GM12878 (cell line): ENCODE measurements at regions of chr13 and their contacts with region 1.

Region 1: GRCh38 chr13:73849292-73849691 is 284.9 kb downstream of the KLF12 start:
- DNase-seq: no peak
- ATAC-seq: peak; percentile 50; the same call in 2 of the 3 replicates
- H3K4me3 ChIP-seq: no peak overlapping the region
- H3K27ac ChIP-seq: no peak overlapping the region
- H3K4me1 ChIP-seq: no peaks in the 10 kb centered on the region
- H3K27me3 ChIP-seq: no peaks in the 10 kb centered on the region
- CTCF ChIP-seq: peak; percentile 25 to 40 (median 29); a peak in 4 of 6 replicates
- EP300 ChIP-seq: no peak
- POLR2A ChIP-seq: no peak
- RAD21 ChIP-seq: peak; percentile 46

Region 2: GRCh38 chr13:73967397-73968165 is 118.3 kb after region 1 on chr13:
- CTCF ChIA-PET with region 1: no interaction called
- POLR2A ChIA-PET with region 1: no interaction called
- RAD21 ChIA-PET with region 1: no interaction called
- SMC1A ChIA-PET with region 1: interaction called, 4 read pairs
- in situ Hi-C with region 1: no loop called
- intact Hi-C with region 1: loop called (anchors 5 kb)
- DNase-seq: peak; percentile 89
- ATAC-seq: peak; percentile 99
- H3K4me3 ChIP-seq: no peak overlapping the region
- H3K27ac ChIP-seq: no peak overlapping the region; the same call in 1 of the 2 replicates
- H3K4me1 ChIP-seq: peaks cover 17% of the 10 kb centered on the region
- H3K27me3 ChIP-seq: no peaks in the 10 kb centered on the region
- CTCF ChIP-seq: no peak
- EP300 ChIP-seq: no peak
- POLR2A ChIP-seq: no peak
- RAD21 ChIP-seq: 0 out of 2 replicates have a peak, but pooled peaks have one; percentile 1

Region 3: GRCh38 chr13:73998631-73999030 is 149.3 kb after region 1 on chr13:
- CTCF ChIA-PET with region 1: interaction called, 10 read pairs
- POLR2A ChIA-PET with region 1: no interaction called
- RAD21 ChIA-PET with region 1: interaction called, 4 read pairs
- SMC1A ChIA-PET with region 1: no interaction called
- in situ Hi-C with region 1: no loop called
- intact Hi-C with region 1: no loop called
- DNase-seq: no peak
- ATAC-seq: peak; percentile 61
- H3K4me3 ChIP-seq: no peak overlapping the region
- H3K27ac ChIP-seq: no peak overlapping the region
- H3K4me1 ChIP-seq: peaks cover 6% of the 10 kb centered on the region
- H3K27me3 ChIP-seq: no peaks in the 10 kb centered on the region
- CTCF ChIP-seq: peak in 2 of 3 experiments; percentile 14 to 19; a peak in 2 of 6 replicates
- EP300 ChIP-seq: no peak
- POLR2A ChIP-seq: no peak
- RAD21 ChIP-seq: peak; percentile 37

Region 4: DNA sequence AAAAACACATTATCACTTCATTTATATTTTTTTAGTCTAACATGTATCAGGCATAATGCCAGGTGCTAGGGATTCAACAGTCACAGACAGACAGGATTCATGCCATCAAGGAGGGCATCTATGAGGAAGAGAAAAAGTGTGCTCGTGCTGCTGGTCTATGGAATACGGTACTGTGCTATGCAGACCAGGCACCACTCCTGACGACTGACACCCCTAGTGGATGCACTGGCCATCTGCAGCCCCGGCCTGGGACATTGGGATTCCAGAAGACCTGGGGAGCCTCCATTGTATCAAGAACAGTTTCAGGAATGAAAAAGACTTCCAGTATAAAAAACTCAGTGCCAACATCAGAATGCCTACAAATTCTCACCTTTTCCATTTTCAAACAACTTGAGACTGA is 190.9 kb after region 1 on chr13:
- CTCF ChIA-PET with region 1: interaction called, 10 read pairs
- POLR2A ChIA-PET with region 1: no interaction called
- RAD21 ChIA-PET with region 1: interaction called, 3 read pairs
- SMC1A ChIA-PET with region 1: interaction called, 7 read pairs
- in situ Hi-C with region 1: no loop called
- intact Hi-C with region 1: no loop called
- DNase-seq: no peak
- ATAC-seq: peak; percentile 100
- H3K4me3 ChIP-seq: no peak overlapping the region
- H3K27ac ChIP-seq: no peak overlapping the region
- H3K4me1 ChIP-seq: no peaks in the 10 kb centered on the region; the same call in 1 of the 2 replicates
- H3K27me3 ChIP-seq: no peaks in the 10 kb centered on the region
- CTCF ChIP-seq: peak; percentile 82 to 88 (median 87)
- EP300 ChIP-seq: no peak
- POLR2A ChIP-seq: no peak
- RAD21 ChIP-seq: peak; percentile 75

Region 5: GRCh38 chr13:74287724-74288169 is 438.5 kb after region 1 on chr13:
- CTCF ChIA-PET with region 1: interaction called, 26 read pairs
- POLR2A ChIA-PET with region 1: no interaction called
- RAD21 ChIA-PET with region 1: interaction called, 8 read pairs
- SMC1A ChIA-PET with region 1: interaction called, 11 read pairs
- in situ Hi-C with region 1: no loop called
- intact Hi-C with region 1: no loop called
- DNase-seq: no peak
- ATAC-seq: peak; percentile 55
- H3K4me3 ChIP-seq: no peak overlapping the region
- H3K27ac ChIP-seq: no peak overlapping the region
- H3K4me1 ChIP-seq: no peaks in the 10 kb centered on the region
- H3K27me3 ChIP-seq: peaks cover 2 to 5% of the 10 kb centered on the region in 2 experiments; a peak in 1 of 4 replicates
- CTCF ChIP-seq: no peak
- EP300 ChIP-seq: no peak
- POLR2A ChIP-seq: no peak
- RAD21 ChIP-seq: no peak